ENCODE measurements at regions of chr16 and their contacts with region 1.

Region 1: DNA sequence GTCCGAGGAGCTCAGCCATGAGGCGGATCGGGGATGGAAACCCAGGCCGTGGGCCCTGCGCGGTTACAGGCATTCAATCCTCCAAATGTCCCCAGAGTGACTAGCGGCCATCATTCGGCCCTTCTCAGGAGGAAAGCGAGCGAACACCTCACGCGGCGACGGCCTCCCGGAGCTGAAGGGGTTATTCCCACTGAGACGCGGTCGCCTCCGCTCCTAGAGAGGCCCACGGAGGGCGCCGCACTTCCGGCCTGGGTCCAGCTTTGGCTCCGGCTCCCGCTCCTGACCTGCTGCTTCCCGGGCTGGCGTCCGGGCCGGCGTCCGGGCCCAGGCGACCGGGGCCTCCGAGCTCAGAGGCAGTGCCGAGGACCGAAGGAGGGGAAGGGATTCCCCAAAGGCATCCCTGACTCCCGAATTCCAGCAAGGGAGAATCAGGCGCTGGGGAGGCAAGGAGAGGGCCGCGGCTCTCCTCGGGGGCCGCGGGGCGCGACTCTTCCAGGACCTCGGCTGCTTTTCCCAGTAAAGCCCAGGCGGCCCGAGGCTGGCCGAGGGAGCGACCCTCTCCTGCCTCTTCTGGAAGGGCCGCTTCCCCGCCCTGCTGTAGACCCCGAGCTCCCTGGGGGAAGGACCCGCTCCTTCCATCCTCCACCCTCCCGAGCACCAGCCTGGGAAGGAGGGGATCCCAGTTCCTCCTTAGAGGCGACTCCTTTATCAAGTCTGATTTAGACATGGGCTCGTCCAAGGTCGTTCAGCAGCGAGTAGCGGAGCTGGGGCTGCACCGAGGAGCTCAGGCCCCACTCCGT is 18.6 kb upstream of the ZNF629 start:
- DNase-seq: peak; percentile 78 to 94 (median 88)
- H3K4me3 ChIP-seq: peak overlapping the region; percentile 63 to 99 (median 88)
- H3K27ac ChIP-seq: peak overlapping the region; percentile 70 to 98 (median 92)
- H3K27me3 ChIP-seq: no peaks in the 10 kb centered on the region
- CTCF ChIP-seq: peak in 47 of 56 donors; percentile 12 to 63 (median 41)

Region 2: GRCh38 chr16:30786936-30787612 is 18.5 kb before region 1 on chr16 and contains the start of gene ZNF629:
- intact Hi-C with region 1: loop called (anchors 1 to 2 kb)
- DNase-seq: peak; percentile 59 to 84 (median 79)
- H3K4me3 ChIP-seq: peak within 1 kb of the TSS; percentile 62 to 99 (median 92)
- H3K27ac ChIP-seq: peak within 1 kb of the TSS; percentile 42 to 96 (median 86)
- H3K27me3 ChIP-seq: no peaks in the 10 kb centered on the region
- CTCF ChIP-seq: peak in 13 of 56 donors; percentile 2 to 48 (median 17)
- total RNA-seq, gene ZNF629: 11.5 to 20.4 (median 15.6) TPM

Region 3: GRCh38 chr16:30893744-30894539 is 88.4 kb after region 1 on chr16 and contains the start of gene BCL7C:
- intact Hi-C with region 1: loop called in 1 of 2 experiments (anchors 5 kb)
- DNase-seq: peak; percentile 60 to 89 (median 77)
- H3K4me3 ChIP-seq: peak within 1 kb of the TSS; percentile 55 to 93 (median 80)
- H3K27ac ChIP-seq: peak within 1 kb of the TSS; percentile 66 to 97 (median 91)
- H3K27me3 ChIP-seq: no peaks in the 10 kb centered on the region
- CTCF ChIP-seq: peak in 51 of 56 donors; percentile 18 to 79 (median 55)
- total RNA-seq, gene BCL7C: 8.8 to 28.1 (median 15.6) TPM